Caco-2 (cell line): ENCODE measurements at regions of chr16 and their contacts with region 1.

Region 1: DNA sequence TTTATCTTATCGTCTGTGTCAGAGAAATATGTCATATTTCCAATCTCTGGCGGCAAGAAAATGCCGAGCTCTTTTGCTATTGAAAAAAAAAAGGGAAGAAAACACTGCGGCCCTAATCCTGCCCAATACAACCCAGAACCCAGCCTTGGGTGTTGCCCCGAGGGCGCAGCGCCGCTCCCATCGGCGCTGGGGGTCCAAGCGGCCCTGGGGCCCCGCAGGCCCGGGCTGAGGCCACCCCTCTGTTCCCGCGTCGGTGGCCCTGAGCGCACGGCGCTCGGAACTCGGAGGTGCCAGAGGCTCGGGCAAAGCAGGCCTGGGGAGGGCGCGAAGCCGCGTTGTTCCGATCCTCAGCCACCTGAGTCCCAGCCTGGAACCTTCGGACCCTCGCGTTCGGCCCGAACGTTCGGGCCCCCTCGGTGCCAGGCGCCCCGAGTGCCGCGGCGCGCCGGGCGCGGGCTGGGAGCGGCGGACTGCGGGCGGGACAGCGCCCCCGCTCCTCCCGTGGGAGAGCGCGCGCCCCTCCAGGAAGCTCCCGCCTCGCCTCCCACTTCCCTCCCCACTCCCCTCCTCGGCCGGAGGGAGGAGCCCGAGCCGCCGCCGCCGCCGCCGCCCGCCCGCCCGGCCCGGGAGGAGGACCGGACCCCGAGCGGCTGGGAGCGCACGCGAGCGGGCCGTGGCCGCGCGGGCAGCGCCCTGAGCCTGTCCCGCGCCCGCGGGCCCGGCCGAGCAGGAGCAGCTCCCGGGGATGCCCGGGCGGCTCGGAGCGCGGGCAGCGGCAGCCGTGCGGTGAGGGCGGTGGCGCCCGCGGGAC is at the start of gene CPNE2:
- DNase-seq: peak; percentile 68 to 82
- H3K4me3 ChIP-seq: peak within 1 kb of the TSS; percentile 85
- H3K4me3 Mint-ChIP-seq: peak within 1 kb of the TSS; percentile 77
- H3K27ac Mint-ChIP-seq: peak within 1 kb of the TSS; percentile 59
- H3K4me1 ChIP-seq: peaks cover 14% of the 10 kb centered on the region
- H3K4me1 Mint-ChIP-seq: peaks cover 12% of the 10 kb centered on the region
- H3K27me3 ChIP-seq: no peaks in the 10 kb centered on the region
- H3K27me3 Mint-ChIP-seq: no peaks in the 10 kb centered on the region
- CTCF ChIP-seq: peak in 1 of 2 experiments; percentile 7
- total RNA-seq, gene CPNE2: 37.7 and 46.3 TPM in 2 replicates

Region 2: DNA sequence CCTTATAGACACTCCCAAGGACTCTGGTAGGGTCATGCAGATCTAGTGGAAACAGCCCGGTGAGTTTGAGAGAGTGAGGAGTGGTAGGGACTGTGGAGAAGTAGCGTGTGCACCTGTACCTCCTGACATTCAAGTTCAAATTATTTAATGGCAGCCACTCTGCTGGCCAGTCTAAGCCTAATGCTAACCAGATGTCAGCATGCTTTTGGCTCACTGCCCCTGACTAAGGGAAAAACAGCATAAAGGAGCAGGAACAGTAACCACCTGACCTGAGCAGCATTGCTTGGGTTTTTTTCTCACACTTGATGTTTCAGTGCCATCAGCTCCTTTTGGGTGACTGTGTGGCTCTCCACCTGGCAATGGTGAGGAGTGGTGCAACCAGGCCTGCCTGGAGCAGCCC is 250.9 kb before region 1 on chr16:
- CTCF ChIA-PET with region 1: no interaction called
- POLR2A ChIA-PET with region 1: no interaction called
- intact Hi-C with region 1: no loop called
- DNase-seq: no peak
- H3K4me3 ChIP-seq: no peak overlapping the region
- H3K4me3 Mint-ChIP-seq: no peak overlapping the region
- H3K27ac Mint-ChIP-seq: peak overlapping the region; percentile 21
- H3K4me1 ChIP-seq: peaks cover 34% of the 10 kb centered on the region
- H3K4me1 Mint-ChIP-seq: peaks cover 26% of the 10 kb centered on the region
- H3K27me3 ChIP-seq: no peaks in the 10 kb centered on the region
- H3K27me3 Mint-ChIP-seq: no peaks in the 10 kb centered on the region
- CTCF ChIP-seq: no peak

Region 3: GRCh38 chr16:57147381-57148221 is 55.4 kb after region 1 on chr16:
- CTCF ChIA-PET with region 1: interaction called, 8 read pairs
- POLR2A ChIA-PET with region 1: no interaction called
- intact Hi-C with region 1: loop called (anchors 5 kb)
- DNase-seq: no peak
- H3K4me3 ChIP-seq: no peak overlapping the region
- H3K4me3 Mint-ChIP-seq: no peak overlapping the region
- H3K27ac Mint-ChIP-seq: no peak overlapping the region
- H3K4me1 ChIP-seq: no peaks in the 10 kb centered on the region; the same call in 1 of the 2 replicates
- H3K4me1 Mint-ChIP-seq: no peaks in the 10 kb centered on the region
- H3K27me3 ChIP-seq: no peaks in the 10 kb centered on the region
- H3K27me3 Mint-ChIP-seq: no peaks in the 10 kb centered on the region
- CTCF ChIP-seq: no peak